GM10248 (cell line): ENCODE measurements at regions of chr1 and their contacts with region 1.

Region 1: DNA sequence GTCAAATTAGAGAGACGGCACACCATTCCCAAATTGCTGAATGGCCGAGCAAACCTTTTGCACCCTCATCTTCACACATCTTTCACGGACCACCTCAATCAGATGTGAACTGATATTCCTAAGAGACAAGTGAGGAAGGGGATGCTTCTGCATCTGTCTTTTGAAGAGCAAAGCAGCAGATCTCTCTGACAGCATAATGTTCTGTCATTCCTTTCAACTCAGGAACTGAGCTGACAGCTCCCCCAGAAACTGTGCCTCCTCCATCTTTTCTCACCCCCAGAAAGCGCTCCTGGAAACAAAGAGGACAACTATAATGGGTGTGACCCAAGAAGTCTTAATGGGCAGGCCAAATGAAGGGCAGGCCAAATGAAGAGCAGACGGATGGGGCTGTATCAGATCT is 256.4 kb downstream of the C1orf94 start:
- DNase-seq: no peak
- CTCF ChIP-seq: no peak

Region 2: DNA sequence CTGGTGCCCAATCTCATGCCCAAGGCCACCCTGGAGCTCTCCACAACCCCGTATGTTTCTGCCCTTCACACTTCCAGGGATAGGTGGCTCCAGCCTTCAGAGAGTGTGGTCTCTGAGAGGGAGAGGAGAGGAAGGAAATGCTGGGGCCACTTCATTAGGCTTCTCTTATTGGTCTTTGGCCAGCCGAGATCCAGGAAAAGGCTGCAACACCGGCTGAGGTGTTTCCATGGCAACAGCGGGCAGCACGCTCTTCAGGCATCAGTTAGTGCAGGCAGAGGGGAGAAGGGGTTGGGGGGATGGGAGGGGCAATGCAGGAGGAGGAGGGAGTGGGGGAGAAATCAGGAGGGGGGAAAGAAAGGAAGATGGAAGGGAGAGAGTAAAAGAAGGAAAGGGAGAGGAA is 46.6 kb after region 1 on chr1:
- CTCF ChIA-PET with region 1: no interaction called
- POLR2A ChIA-PET with region 1: no interaction called
- DNase-seq: no peak
- CTCF ChIP-seq: no peak

Region 3: GRCh38 chr1:34950428-34950827 is 517.3 kb after region 1 on chr1:
- CTCF ChIA-PET with region 1: no interaction called
- POLR2A ChIA-PET with region 1: interaction called, 10 read pairs
- DNase-seq: no peak
- CTCF ChIP-seq: no peak